ENCODE measurements at regions of chr3 and their contacts with region 1.

Region 1: DNA sequence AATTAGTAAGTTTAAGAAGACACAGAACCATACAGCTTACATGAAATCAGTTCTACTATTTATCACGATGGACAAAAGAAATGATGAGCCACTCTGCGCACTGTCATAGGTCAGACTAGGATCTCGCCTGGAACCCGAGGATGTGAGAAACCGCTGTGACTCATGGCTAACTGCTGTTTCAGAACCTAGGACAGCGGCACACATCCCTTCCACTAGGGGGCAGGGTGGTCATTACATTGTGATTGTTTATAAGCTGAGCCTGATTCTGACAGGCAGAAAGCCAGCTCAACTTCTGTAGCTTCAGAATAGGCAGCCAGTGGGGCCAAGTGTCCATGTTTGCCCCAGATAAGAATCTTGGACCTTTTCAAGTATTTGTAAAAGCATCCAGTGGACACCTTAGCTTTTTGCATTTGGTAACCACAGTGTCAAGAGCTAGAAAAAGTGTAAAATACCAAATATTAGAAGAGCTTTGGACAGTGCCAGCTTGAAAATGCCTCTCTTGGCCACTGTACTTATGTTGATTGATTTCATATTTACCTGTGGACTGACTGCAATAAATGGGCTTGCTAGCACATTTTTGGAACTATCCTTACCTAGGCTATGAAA is 115.8 kb downstream of the KBTBD8 start:
- DNase-seq: peak; percentile 87
- ATAC-seq: peak; percentile 93
- H3K4me3 Mint-ChIP-seq: no peak overlapping the region
- H3K27ac Mint-ChIP-seq: no peak overlapping the region
- H3K4me1 Mint-ChIP-seq: peaks cover 6% of the 10 kb centered on the region
- H3K27me3 Mint-ChIP-seq: peaks cover 9% of the 10 kb centered on the region

Region 2: DNA sequence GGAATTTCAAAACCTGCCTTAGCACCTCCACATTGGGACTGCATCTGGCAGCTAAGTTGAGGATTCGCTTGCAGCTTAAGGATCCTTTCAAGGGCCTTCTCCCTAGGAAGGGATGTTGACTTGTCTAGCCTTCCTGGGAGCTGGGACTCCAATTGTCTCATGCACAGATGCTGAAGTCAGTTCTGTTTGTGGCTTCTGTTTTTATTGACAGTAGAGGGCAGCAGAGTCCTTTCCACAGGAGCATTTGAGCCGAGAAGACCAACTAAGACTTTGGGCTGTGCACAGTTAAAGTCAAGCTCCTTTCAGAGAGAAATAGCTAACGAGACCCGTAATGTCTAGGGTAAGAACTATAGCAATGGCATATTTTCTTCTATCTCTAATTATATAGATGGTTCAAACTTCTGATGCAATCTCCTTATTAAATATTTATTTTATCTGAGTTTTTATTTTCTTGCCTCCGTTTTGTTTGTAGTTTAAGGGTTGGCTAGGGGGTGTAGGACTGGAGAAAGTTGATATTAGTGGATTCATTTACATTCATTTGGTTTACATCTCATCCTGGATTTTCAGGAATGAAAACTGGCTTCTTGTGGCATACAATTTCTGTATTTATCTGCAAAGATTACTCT is 175.5 kb before region 1 on chr3:
- CTCF ChIA-PET with region 1: interaction called, 11 read pairs
- POLR2A ChIA-PET with region 1: no interaction called
- DNase-seq: peak; percentile 46
- ATAC-seq: peak; percentile 61
- H3K4me3 Mint-ChIP-seq: no peak overlapping the region
- H3K27ac Mint-ChIP-seq: no peak overlapping the region
- H3K4me1 Mint-ChIP-seq: no peaks in the 10 kb centered on the region
- H3K27me3 Mint-ChIP-seq: peaks cover 17% of the 10 kb centered on the region

Region 3: DNA sequence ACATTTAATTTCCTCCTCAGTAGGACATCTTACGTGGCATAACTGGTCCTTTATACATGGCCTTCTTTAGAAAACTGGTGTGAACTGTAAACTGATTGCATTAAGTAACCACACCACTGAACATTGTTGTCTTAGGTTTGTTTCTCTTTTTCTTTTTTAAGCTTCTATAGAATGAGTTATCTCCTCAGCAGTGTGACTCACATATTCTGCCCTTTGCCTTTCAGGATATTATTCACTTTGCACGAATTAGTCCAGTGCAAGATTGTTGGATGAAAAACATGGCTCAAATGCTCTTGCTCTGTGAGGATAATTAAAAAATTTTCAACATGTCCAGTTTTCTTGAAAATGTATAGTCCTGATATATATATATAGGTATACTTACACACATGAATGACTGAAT is 31.8 kb after region 1 on chr3:
- CTCF ChIA-PET with region 1: no interaction called
- POLR2A ChIA-PET with region 1: no interaction called
- DNase-seq: no peak
- ATAC-seq: no peak
- H3K4me3 Mint-ChIP-seq: no peak overlapping the region
- H3K27ac Mint-ChIP-seq: no peak overlapping the region
- H3K4me1 Mint-ChIP-seq: no peaks in the 10 kb centered on the region
- H3K27me3 Mint-ChIP-seq: no peaks in the 10 kb centered on the region

Region 4: DNA sequence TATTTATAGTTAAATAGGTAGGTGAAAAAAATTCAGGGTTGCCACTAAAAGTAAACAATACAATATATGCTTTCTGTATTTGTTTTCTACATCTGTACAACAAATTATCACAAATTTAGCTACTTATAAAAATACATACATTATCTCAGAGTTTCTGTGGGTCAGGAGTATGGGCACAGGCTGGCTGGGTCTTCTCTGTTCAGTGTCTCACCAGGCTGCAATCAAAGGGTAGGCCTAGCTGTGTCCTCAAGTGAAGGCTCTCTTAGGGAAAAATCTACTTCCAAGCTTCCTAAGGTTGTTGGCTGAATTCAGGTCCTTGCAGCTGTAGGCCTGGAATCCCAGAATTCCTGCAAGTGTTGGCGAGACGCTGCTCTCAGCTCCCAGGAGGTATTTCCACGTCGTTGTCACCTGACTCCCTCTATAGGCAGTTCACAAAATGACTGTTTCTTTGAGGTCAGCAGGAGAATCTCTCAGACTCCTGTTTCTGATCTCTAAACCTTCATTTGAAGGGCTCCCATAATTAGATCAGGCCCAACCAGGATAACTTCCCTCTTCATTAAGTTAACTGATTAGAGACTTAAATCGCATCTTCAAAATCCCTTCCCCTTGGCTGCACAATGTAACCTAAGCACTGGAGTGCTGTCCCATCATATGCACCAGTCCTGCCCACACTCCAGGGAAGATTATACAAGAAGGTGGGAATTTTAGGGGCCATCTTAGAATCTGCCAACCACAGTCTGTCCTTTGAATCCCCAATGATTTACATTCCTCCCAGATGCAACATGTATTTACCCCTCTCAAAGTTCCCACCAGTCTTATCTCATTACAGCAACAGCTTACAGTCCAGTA is 243.9 kb after region 1 on chr3:
- CTCF ChIA-PET with region 1: interaction called, 10 read pairs
- POLR2A ChIA-PET with region 1: no interaction called
- DNase-seq: no peak
- ATAC-seq: no peak
- H3K4me3 Mint-ChIP-seq: no peak overlapping the region
- H3K27ac Mint-ChIP-seq: no peak overlapping the region
- H3K4me1 Mint-ChIP-seq: peaks cover 23% of the 10 kb centered on the region
- H3K27me3 Mint-ChIP-seq: no peaks in the 10 kb centered on the region

Region 5: DNA sequence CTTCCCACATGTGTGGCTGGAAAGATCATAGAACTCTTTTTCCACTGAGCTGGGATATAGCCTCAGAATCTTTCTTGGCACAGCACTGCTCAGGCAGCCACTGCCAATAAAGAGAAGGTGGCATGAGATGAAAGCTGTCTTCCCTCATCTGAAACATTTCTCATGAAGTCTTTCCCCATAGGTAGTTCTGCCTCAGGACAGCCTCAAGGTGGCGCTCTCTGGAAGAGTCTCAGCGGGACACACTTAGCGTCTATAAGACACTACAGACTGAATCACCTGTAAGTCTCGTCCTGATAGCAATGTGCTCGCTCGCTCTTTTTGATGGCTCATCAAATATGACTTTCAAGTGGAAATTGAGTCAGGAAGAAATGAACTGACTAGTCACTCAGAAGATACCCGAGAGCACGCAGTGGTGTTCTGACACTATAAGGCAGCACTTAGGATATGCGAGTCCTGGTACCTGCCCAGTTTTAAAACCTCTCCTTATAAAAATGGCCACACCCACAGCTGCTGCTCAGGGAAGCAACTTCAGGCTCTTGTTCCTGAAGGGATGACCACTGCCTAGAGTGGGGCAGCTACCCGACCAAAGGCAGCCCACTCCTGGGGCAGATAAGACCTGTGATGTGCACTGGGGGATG is 271.0 kb after region 1 on chr3:
- CTCF ChIA-PET with region 1: interaction called, 21 read pairs
- POLR2A ChIA-PET with region 1: no interaction called
- DNase-seq: peak; percentile 57
- ATAC-seq: peak; percentile 57
- H3K4me3 Mint-ChIP-seq: no peak overlapping the region
- H3K27ac Mint-ChIP-seq: no peak overlapping the region
- H3K4me1 Mint-ChIP-seq: peaks cover 12% of the 10 kb centered on the region
- H3K27me3 Mint-ChIP-seq: no peaks in the 10 kb centered on the region

Region 6: DNA sequence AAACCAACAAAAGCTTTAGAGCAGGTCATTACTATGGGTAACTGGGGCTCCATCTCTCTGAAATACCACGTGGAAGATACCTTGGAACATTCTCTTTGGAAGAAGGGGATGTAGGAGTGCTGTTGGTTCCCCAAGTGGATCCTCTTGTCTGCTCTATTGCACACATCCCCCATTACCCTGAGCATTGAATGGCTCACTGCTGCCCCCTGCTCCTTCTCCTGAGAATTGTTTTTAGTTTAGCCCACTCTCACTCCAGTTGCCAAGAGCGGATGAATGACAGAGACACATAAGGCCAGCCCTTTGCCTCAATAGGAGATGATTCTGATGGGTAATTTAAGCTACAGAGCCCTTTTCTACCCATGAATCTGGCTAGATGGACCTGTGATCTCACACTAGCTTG is 676.1 kb after region 1 on chr3:
- CTCF ChIA-PET with region 1: interaction called, 28 read pairs
- POLR2A ChIA-PET with region 1: no interaction called
- DNase-seq: peak; percentile 72
- ATAC-seq: peak; percentile 86
- H3K4me3 Mint-ChIP-seq: no peak overlapping the region
- H3K27ac Mint-ChIP-seq: no peak overlapping the region
- H3K4me1 Mint-ChIP-seq: peaks cover 13% of the 10 kb centered on the region
- H3K27me3 Mint-ChIP-seq: peaks cover 2% of the 10 kb centered on the region

Region 7: DNA sequence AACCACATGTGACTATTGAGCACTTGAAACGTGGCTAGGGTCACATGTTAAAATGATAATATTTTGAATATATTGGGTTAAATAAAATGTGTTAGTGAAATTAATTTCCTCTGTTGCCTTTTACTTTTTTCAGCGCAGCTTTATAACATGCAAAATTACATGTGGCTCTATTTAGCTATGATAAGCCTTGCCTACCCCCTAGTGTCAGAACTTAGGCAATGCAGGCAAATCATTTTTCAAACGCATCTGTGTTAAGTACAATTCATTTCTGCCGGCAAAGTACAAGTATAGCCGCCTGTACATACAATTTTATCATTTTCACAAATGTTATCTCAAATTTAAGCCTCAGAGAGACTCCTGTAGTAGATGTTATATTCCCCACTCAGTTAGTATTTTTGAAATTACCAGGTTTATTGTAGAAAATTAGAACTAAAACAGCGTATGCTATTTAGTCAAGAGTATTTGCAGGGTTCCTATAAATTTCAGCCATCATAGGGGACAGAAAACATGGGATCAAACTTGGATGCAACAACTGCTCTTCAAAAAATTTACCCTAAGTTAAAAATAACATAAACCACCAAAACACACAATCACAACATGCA is 1762.3 kb after region 1 on chr3:
- CTCF ChIA-PET with region 1: interaction called, 24 read pairs
- POLR2A ChIA-PET with region 1: no interaction called
- DNase-seq: peak; percentile 45
- ATAC-seq: peak; percentile 60
- H3K4me3 Mint-ChIP-seq: no peak overlapping the region
- H3K27ac Mint-ChIP-seq: no peak overlapping the region
- H3K4me1 Mint-ChIP-seq: no peaks in the 10 kb centered on the region
- H3K27me3 Mint-ChIP-seq: peaks cover 19% of the 10 kb centered on the region